ENCODE measurements at regions of chr19 and their contacts with region 1.

Region 1: DNA sequence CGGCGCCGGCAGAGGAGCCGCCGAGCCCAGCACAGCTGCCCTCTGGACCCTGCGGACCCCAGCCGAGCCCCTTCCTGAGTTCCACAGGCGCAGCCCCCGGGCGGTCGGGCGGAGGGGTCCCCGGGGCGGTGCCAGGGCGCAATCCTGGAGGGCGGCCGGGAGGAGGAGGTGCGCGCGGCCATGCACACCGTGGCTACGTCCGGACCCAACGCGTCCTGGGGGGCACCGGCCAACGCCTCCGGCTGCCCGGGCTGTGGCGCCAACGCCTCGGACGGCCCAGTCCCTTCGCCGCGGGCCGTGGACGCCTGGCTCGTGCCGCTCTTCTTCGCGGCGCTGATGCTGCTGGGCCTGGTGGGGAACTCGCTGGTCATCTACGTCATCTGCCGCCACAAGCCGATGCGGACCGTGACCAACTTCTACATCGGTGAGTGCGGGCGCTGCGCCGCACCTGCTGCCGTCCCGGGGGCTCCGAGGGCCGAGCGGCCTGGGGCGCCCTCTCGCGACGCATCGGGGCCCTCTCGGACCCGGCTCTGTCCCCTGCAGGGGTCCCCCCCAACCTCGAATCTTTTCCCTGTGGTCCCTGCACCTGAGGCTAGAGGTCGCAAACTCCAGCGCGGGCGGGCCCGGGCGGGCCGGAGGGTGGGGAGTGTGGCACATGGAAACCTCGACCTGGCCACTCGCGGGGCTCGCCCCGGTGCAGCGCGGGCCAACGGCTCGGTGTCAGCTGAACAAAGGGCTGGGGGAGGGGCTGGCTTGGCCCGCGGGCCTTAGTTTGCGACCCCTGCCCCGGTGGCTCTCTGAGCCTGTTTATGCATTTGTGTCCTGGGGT is at the start of gene KISS1R:
- DNase-seq: peak in 1 of 7 donors; percentile 33
- H3K4me3 ChIP-seq: peak within 1 kb of the TSS in 1 of 4 donors; percentile 42
- H3K27ac ChIP-seq: no peak within 1 kb of the TSS
- H3K4me1 ChIP-seq: peaks cover 9 to 30% of the 10 kb centered on the region in 2 donors
- H3K27me3 ChIP-seq: peaks cover 42% of the 10 kb centered on the region
- CTCF ChIP-seq: peak in 3 of 6 experiments; percentile 24 to 35 (median 33)
- POLR2A ChIP-seq: no peak
- total RNA-seq, gene KISS1R: 0.25 to 0.44 TPM in 2 of 9 donors, not detected in the others

Region 2: DNA sequence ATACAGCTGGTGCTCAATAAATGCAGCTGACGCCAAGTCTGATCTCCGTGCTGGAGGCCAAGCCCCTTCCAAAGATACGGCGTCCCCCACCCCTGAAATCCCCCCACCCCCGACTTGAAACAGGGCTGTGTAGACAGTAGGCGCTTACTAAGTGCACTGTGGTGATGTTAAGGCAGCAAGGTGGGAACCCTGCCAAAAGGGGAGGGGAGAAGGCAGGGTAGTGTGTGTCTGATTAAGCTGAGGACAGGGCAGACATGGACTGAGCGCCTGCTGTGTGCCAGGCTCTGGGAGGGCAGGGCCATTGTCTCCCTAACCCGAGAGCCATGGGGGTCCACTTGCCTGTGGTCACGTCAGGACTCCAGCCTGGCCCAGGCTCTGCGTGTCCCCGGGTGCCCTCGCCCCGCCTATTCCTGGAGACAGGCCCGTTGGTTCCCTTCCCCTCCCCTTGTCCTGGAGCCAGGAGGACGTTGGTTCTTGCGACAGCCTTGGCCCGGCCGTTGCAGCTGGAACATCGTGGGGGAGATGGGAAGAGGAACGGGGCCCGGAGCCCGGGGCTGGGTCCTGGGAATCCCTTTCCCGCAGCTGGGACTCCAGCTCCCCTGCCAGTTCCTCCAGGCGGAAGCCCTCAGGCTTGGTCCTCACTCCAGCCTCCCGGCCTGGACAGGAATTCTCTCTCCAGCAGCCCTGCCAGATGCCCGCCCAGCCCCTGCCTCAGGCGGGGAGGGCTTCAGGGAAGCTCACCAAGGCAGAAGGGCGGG is 67.1 kb before region 1 on chr19:
- intact Hi-C with region 1: no loop called
- DNase-seq: peak; percentile 88 to 98 (median 96)
- H3K4me3 ChIP-seq: peak overlapping the region in 1 of 4 donors; percentile 21
- H3K27ac ChIP-seq: peak overlapping the region; percentile 21 to 92 (median 65)
- H3K4me1 ChIP-seq: peaks cover 0 to 10% of the 10 kb centered on the region in 2 donors
- H3K27me3 ChIP-seq: peaks cover 14% of the 10 kb centered on the region
- CTCF ChIP-seq: no peak
- POLR2A ChIP-seq: peak in 1 of 2 donors; percentile 35

Region 3: GRCh38 chr19:860481-861101 is 56.9 kb before region 1 on chr19:
- intact Hi-C with region 1: loop called in 1 of 2 experiments (anchors 5 kb)
- DNase-seq: peak in 2 of 7 donors; percentile 49 to 61
- H3K4me3 ChIP-seq: peak overlapping the region in 1 of 4 donors; percentile 46
- H3K27ac ChIP-seq: peak overlapping the region in 1 of 5 donors; percentile 8
- H3K4me1 ChIP-seq: peaks cover 6 to 9% of the 10 kb centered on the region in 2 donors
- H3K27me3 ChIP-seq: peaks cover 9% of the 10 kb centered on the region
- CTCF ChIP-seq: peak in 1 of 6 experiments; percentile 9
- POLR2A ChIP-seq: no peak

Region 4: DNA sequence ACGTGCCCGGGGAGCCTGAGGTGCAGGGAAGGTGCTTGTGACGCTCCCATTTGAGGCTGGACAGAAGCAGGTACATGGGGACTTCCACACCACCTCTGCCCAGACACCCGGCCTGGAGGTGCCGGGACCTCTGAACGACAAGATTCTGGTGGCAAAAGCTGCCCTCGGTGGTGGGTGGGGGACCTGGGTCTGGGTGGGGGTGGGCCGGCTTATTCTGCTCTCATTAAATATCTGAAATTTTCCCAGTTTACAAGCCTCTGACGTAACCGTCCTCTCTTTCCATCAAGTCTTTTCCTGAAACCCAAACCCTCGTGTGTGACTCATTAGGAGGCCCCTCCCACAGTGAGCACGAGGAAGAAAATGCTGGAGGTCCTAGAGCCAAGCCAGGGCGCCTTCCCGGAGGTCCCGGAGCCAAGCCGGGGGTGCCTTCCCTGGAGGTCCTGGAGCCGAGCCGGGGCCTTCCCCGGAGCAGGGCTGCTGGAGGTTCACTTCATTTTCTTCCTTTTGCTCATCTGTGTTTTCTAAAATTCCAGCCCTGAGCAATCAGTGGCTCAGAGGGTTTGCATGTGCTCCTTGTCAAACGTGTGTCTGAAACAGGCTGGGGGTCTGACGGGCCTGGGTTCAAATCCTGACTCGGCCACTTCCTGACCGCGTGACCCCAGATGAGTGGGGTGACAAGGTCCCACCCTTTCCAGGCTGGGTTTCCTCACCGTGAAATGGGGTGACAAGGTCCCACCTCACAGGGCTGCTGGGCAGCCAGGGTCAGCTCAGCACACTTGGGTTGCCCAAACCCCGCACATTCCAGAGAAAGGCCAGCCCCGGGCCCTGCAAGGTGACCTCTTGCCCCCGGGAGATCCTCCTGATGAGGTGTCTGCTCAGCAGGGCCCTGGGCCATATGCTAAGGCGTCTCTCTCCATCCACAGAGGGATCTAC is 48.0 kb before region 1 on chr19:
- intact Hi-C with region 1: loop called (anchors 2 to 5 kb)
- DNase-seq: peak; percentile 61 to 88 (median 79)
- H3K4me3 ChIP-seq: no peak overlapping the region
- H3K27ac ChIP-seq: peak overlapping the region; percentile 46 to 91 (median 70)
- H3K4me1 ChIP-seq: peaks cover 12 to 18% of the 10 kb centered on the region in 2 donors
- H3K27me3 ChIP-seq: no peaks in the 10 kb centered on the region
- CTCF ChIP-seq: no peak
- POLR2A ChIP-seq: no peak

Measured in adrenal gland (tissue), 19 donors.